ENCODE measurements at regions of chr11 and their contacts with region 1.

Region 1: DNA sequence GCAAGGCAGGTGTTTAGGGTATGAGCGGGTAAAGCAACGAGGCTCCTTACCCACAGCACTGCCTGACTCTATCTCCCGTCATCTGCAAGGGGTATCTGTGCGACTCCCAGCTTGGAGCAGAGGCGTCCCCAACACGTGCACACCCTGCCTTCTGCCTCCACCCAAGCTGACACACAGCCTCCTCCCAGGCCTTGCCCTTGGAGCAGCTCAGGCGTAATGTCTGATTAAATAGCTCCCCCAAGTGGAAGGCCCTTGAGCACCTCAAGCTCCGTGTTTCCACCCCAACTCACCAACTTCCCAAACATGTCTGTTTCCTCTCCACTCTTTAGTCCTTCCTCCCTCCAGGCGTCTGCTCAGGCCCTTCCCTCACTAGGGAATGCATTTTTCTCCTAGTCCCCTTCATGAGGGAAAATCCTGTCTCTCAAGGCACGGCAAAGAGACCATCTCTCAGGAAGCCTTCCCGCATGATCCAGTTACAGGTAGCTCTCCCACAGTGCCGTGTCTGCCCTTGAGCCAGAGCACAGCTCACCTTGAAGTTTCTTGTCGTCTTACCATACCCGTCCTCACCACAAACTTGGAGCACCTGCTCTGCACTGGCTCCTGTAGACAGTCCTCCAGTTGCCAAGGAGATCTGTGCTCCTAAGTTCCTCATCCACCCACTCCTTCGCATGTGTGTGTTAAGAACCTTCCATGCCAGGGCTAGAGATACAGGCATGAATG is 15.8 kb downstream of the CYB5R2 start:
- DNase-seq: peak; percentile 85
- H3K4me3 ChIP-seq: no peak overlapping the region
- H3K27ac ChIP-seq: peak overlapping the region in 1 of 2 donors; percentile 60
- H3K4me1 ChIP-seq: peaks cover 17% of the 10 kb centered on the region
- H3K27me3 ChIP-seq: no peaks in the 10 kb centered on the region
- CTCF ChIP-seq: peak in 2 of 3 experiments; percentile 57 to 60
- POLR2A ChIP-seq: no peak

Region 2: DNA sequence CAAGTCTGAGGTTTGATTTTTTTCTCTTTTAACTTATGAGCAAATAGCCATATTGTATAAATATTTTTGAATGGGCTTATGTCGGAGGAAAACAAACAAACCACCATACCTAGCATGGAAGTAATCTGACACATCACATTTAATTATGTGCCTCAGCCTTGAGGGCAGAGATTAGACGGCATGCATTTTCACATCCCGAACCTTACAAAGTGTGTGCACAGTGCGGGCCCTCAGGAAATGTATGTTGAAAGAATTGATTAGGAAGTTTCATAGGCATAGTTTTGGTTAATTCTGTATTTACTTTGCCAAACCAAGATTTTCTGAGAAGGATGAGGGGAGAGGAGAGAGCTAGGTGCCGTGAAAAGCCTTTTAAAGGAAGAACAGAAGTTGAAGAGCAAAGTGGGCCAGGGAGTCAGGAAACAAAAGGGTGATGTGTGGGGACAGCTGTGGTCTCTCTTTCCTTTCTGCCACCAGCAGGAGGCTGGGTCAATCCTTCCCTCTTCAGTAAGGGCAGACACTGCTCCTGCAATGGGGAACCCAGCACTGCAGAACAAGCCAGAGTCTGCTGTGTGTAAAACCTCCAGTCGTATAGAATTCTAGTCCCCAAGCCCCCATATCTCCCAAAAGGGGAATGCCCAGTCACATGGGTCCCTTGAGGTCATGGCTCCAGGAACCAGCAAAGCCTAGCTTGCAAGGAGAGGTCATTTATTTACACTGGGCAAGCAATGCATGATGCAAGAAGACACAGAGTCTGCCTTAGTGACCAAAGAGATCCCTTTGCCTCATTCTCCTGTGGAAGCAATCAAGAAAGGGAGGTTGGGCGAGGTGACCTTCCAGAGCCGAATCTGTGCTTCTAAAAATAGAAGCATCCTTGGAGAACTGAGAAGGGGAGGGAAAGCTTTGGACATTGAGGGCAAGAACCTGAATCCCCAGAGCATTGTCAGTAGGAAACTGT is 243.2 kb before region 1 on chr11:
- intact Hi-C with region 1: no loop called
- DNase-seq: no peak
- H3K4me3 ChIP-seq: no peak overlapping the region
- H3K27ac ChIP-seq: no peak overlapping the region
- H3K4me1 ChIP-seq: no peaks in the 10 kb centered on the region
- H3K27me3 ChIP-seq: no peaks in the 10 kb centered on the region
- CTCF ChIP-seq: no peak
- POLR2A ChIP-seq: no peak

Region 3: GRCh38 chr11:7577291-7578190 is 79.9 kb before region 1 on chr11:
- intact Hi-C with region 1: loop called (anchors 5 kb)
- DNase-seq: peak; percentile 63
- H3K4me3 ChIP-seq: peak overlapping the region; percentile 2 to 49
- H3K27ac ChIP-seq: peak overlapping the region; percentile 82 to 83
- H3K4me1 ChIP-seq: peaks cover 77% of the 10 kb centered on the region
- H3K27me3 ChIP-seq: no peaks in the 10 kb centered on the region
- CTCF ChIP-seq: no peak
- POLR2A ChIP-seq: no peak

Measured in testis (tissue), 5 donors.